Prostate gland (tissue), 2 donors: ENCODE measurements at regions of chr16 and their contacts with region 1.

Region 1: GRCh38 chr16:49407873-49408550 is 34.4 kb downstream of the C16orf78 start:
- DNase-seq: peak; percentile 78
- H3K4me3 ChIP-seq: no peak overlapping the region
- H3K27ac ChIP-seq: no peak overlapping the region
- H3K4me1 ChIP-seq: no peaks in the 10 kb centered on the region
- H3K27me3 ChIP-seq: no peaks in the 10 kb centered on the region
- CTCF ChIP-seq: peak; percentile 64 to 90 (median 83)
- POLR2A ChIP-seq: no peak

Region 2: GRCh38 chr16:49592546-49593423 is 184.8 kb after region 1 on chr16:
- intact Hi-C with region 1: loop called (anchors 5 kb)
- DNase-seq: no peak
- H3K4me3 ChIP-seq: no peak overlapping the region
- H3K27ac ChIP-seq: no peak overlapping the region
- H3K4me1 ChIP-seq: no peaks in the 10 kb centered on the region
- H3K27me3 ChIP-seq: no peaks in the 10 kb centered on the region
- CTCF ChIP-seq: peak in 3 of 4 experiments; percentile 58 to 61 (median 59)
- POLR2A ChIP-seq: no peak

Region 3: DNA sequence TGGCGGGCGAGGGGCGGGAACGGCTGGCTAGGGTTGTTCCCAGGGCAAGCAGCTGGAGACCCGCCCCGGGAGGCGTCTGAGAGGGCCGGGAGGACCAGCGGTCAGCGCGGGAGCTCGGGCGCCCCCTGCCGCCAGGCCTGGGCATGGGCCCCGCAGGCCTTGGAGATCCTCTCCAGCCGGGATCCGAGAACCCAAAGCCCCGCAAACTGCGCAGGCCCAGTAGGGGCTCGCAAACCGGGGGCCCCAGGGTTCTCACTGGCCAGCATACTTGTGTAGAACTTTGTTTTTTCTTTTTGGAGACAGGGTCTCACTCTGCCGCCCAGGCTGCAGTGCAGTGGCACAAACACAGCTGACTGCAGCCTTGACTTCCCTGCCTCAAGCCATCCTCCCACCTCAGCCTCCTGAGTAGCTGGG is 468.7 kb after region 1 on chr16:
- intact Hi-C with region 1: loop called (anchors 5 kb)
- DNase-seq: no peak
- H3K4me3 ChIP-seq: no peak overlapping the region
- H3K27ac ChIP-seq: no peak overlapping the region
- H3K4me1 ChIP-seq: no peaks in the 10 kb centered on the region
- H3K27me3 ChIP-seq: no peaks in the 10 kb centered on the region
- CTCF ChIP-seq: peak in 3 of 4 experiments; percentile 59 to 64 (median 62)
- POLR2A ChIP-seq: no peak

Region 4: DNA sequence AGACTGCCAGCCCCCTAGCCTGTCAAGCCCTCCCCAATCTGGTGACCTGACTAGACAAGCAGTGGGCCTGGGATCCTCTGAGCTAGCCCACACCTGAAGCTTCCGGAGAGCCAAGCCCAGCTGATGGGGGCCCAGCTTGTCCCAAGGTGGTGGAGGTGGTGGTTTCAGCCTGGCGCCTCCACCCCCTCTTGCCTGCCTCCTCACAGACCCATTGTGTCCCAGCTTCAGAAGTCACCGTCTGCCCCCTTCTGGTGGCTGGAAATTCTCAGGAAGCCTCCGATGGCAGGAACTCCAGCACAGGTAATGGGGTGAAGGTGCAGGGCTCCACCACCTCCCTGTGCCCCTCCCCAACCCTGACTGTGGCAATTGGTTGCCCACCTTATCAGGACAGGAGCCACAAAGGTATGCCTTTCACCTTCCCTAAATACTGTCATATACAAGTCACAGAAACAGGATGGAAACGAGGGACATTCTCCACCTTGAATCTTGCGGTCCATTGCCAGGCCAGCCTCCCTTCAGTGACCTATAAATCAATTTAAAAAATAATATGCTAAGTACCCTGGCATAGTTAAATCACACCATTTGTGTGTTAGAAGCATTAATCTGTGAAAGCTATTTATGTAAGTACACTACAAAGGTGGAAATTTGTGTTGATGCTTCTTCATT is 513.9 kb after region 1 on chr16:
- intact Hi-C with region 1: loop called (anchors 2 kb)
- DNase-seq: peak; percentile 48
- H3K4me3 ChIP-seq: no peak overlapping the region
- H3K27ac ChIP-seq: no peak overlapping the region
- H3K4me1 ChIP-seq: no peaks in the 10 kb centered on the region
- H3K27me3 ChIP-seq: no peaks in the 10 kb centered on the region
- CTCF ChIP-seq: peak; percentile 13 to 57 (median 48)
- POLR2A ChIP-seq: no peak